MCF 10A (cell line): ENCODE measurements at regions of chr4 and their contacts with region 1.

Region 1: DNA sequence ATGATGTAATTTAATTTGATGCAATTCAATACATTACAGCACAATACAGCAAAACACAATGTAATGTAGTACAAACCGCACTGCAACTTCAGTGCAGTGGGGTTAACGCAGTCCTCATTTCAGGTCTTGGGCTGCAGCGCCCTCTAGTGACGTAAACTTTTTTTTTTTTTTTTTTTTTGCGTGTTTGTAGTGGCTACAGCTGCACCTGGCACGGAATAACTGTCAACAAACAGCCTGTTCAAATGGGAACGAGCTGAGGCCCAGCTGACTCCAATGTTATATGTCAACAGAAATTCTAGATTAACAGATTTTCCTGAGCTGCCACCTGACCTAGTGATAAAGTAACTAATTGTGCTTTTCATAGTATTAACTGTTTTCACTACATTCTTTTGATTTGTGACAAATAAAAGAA is 33.5 kb upstream of the RASSF6 start:
- DNase-seq: peak; percentile 71
- H3K4me3 Mint-ChIP-seq: no peak overlapping the region
- H3K27ac Mint-ChIP-seq: no peak overlapping the region
- H3K4me1 Mint-ChIP-seq: peaks cover 14% of the 10 kb centered on the region
- H3K27me3 Mint-ChIP-seq: no peaks in the 10 kb centered on the region
- CTCF ChIP-seq: peak; percentile 52

Region 2: DNA sequence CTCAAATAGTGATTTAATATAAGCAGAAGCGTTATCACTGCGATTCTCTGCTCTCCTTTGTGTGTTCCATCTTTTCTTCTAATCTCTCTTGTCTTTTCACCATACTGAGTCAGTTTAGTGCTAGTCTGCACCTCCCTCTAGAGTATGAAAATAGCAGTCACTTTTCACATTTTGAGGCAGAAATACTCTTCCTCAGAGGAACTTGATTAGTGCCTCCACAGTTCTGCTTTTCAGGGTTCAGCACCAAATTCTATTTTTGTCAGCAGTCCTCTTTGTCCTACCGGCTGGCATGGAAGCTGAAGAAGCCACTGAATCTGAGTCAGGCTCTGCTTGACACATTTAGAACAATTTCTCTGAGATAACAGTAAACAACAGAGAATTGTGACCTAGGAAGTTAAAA is 345.4 kb before region 1 on chr4:
- CTCF ChIA-PET with region 1: interaction called, 23 read pairs
- POLR2A ChIA-PET with region 1: no interaction called
- intact Hi-C with region 1: loop called (anchors 1 kb)
- DNase-seq: peak; percentile 10
- H3K4me3 Mint-ChIP-seq: no peak overlapping the region
- H3K27ac Mint-ChIP-seq: no peak overlapping the region
- H3K4me1 Mint-ChIP-seq: peaks cover 11% of the 10 kb centered on the region
- H3K27me3 Mint-ChIP-seq: no peaks in the 10 kb centered on the region
- CTCF ChIP-seq: peak; percentile 22

Region 3: GRCh38 chr4:73341454-73341853 is 312.2 kb before region 1 on chr4:
- CTCF ChIA-PET with region 1: interaction called, 42 read pairs
- POLR2A ChIA-PET with region 1: interaction called, 3 read pairs
- intact Hi-C with region 1: loop called (anchors 1 kb)
- DNase-seq: peak; percentile 72
- H3K4me3 Mint-ChIP-seq: no peak overlapping the region
- H3K27ac Mint-ChIP-seq: no peak overlapping the region
- H3K4me1 Mint-ChIP-seq: no peaks in the 10 kb centered on the region
- H3K27me3 Mint-ChIP-seq: no peaks in the 10 kb centered on the region
- CTCF ChIP-seq: peak; percentile 62

Region 4: DNA sequence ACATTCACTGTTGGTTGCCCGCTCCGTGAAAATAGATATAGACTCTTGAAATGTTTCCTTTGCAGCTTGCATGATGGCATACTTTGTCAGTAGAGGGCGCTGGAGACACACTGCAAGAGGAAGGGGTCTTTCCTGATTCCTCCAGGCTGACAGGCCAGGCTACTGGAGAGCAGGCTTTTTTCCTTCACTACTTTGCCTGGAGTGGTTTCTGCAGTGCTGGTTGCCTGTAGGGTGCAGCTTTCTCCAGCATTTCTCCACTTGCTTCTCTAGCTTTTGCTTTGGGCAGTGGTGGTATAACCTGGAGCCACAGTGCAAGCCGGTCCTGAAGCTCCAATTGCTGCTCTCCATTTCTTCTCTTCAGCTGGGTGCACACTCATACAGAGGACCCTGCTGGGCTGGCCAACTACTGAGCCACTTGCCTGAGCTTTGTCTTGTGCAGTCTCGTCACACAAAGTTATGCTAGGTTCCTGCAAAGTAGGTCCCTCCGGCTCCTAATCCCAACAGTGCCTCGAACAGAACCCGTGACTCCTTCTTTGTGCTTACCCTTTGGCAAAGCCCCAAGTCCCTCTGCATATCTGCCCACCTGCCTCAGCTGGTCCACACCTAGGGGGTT is 79.8 kb before region 1 on chr4:
- CTCF ChIA-PET with region 1: interaction called, 126 read pairs
- POLR2A ChIA-PET with region 1: interaction called, 8 read pairs
- intact Hi-C with region 1: loop called (anchors 1 kb)
- DNase-seq: peak; percentile 83
- H3K4me3 Mint-ChIP-seq: no peak overlapping the region
- H3K27ac Mint-ChIP-seq: no peak overlapping the region
- H3K4me1 Mint-ChIP-seq: no peaks in the 10 kb centered on the region
- H3K27me3 Mint-ChIP-seq: no peaks in the 10 kb centered on the region
- CTCF ChIP-seq: peak; percentile 83

Region 5: DNA sequence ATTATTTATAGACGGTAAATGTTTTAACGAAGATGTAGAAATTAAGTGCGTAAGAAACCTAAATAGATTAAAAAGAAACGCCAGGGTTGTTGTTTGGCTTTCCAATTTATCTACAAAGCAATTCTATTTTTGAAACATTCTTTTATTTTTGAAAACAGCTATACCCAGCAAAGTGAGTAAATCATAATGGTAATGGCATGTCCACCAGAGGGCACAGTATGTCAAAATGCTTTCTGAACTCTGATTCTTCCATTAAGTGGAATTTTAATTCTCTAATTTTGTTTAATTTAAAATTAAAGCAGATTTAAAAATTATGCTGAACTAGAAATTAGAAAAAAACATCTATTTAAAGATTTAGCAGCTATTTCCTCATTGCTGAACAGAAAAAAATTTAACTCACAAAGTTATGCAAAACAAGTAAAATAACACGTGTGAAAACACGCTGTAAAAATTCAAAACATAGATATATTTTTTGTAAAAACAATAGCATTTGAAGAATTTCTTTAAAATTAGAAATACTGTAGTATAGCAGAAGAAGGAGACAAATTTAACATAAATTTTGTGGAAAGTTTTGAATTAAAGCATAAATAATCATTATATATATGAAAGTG is 60.0 kb before region 1 on chr4:
- CTCF ChIA-PET with region 1: interaction called, 99 read pairs
- POLR2A ChIA-PET with region 1: interaction called, 14 read pairs
- intact Hi-C with region 1: loop called (anchors 1 kb)
- DNase-seq: peak; percentile 51
- H3K4me3 Mint-ChIP-seq: no peak overlapping the region
- H3K27ac Mint-ChIP-seq: no peak overlapping the region
- H3K4me1 Mint-ChIP-seq: peaks cover 18% of the 10 kb centered on the region
- H3K27me3 Mint-ChIP-seq: no peaks in the 10 kb centered on the region
- CTCF ChIP-seq: peak; percentile 38

Region 6: GRCh38 chr4:73620115-73620792 is 33.4 kb before region 1 on chr4 and contains the start of gene RASSF6:
- CTCF ChIA-PET with region 1: interaction called, 5 read pairs
- POLR2A ChIA-PET with region 1: interaction called, 13 read pairs
- intact Hi-C with region 1: no loop called
- DNase-seq: peak; percentile 63
- H3K4me3 Mint-ChIP-seq: peak within 1 kb of the TSS; percentile 84
- H3K27ac Mint-ChIP-seq: peak within 1 kb of the TSS; percentile 47
- H3K4me1 Mint-ChIP-seq: peaks cover 19% of the 10 kb centered on the region
- H3K27me3 Mint-ChIP-seq: no peaks in the 10 kb centered on the region
- CTCF ChIP-seq: no peak
- total RNA-seq, gene RASSF6: 1.6 and 2.4 TPM in 2 replicates